Cardiac septum (tissue), 1 donor: ENCODE measurements at regions of chr20 and their contacts with region 1.

Region 1: DNA sequence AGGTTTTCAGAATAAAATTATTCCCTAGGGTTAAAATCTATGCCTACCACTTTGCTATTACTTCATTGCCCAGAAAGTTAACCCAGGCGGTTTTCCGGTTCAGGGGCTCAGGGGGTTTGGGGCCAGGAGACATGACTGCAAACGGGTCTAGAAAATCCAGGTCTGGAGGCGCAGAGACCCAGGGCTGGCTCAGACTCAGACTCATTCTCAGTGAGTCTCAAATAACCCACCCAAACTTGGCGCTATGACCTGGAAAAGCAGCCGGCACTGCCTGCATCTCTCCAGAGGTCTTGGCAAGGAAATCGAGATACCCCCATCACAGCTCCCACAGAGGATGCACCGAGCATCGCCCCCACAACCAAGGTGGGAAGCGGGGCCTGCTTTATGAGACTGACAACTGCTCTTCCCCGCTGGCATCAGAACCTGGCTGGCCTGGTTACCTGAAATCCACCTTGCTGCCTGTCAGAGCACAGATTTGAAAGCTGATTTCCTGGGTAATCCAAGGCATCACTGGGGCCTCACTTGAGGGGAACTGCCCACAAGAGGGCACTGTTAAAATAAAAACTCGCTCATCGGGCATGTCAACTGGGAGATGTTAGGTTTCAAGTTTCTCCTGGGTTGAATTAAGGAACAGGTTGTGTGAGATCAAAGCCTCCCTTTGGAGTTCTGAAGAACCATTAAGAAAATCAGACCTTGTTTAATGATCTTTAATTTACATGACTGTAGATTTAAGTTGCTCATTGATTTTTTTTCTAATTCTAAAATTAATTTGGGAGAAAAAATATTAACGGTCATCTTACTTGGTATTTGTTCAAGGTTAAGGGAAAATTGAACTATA is 55.1 kb downstream of the KIF16B start:
- DNase-seq: no peak

Region 2: DNA sequence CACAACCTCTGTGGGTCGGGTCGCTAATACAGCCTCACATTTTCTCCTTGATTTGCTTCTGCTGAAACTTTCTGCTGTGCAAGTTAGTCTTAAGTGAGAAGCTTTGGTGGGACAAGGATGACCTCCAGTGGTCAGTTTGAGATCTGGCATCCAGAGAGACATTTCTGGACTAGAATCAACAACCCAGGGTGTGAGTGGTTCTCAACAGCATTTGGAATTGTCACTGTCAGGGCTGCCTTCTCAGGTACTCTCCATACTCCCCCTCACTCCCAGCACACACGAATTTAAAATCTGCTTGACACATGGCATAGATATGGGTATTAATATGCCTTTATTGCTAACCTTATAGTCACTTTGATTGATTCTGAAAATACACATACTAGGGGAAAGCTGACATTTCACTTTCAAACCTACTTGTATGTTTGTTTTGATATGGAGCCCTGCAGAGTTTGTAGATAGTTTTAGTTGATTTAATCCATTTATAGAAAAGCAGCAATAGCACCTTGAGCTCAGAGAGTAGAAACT is 243.2 kb after region 1 on chr20:
- intact Hi-C with region 1: loop called (anchors 5 kb)
- DNase-seq: no peak